Activated T-helper 2 cell treated with anti-CD3 and anti-CD28 coated beads, Interferon-gamma antibody, Interleukin-2, Interleukin-4, amounts not matched to agents 10 μg/mL and 5 μg/mL and 100 μg/mL, durations not matched to agents 14 hours and 24 hours and 36 hours (primary cell): ENCODE measurements at regions of chr13 and their contacts with region 1.

Region 1: GRCh38 chr13:20475927-20476691 is 49.5 kb downstream of the CRYL1 start:
- DNase-seq: peak; percentile 67
- H3K4me3 Mint-ChIP-seq: peak overlapping the region; percentile 53
- H3K27ac Mint-ChIP-seq: peak overlapping the region; percentile 82
- H3K4me1 Mint-ChIP-seq: peaks cover 31% of the 10 kb centered on the region
- H3K27me3 Mint-ChIP-seq: no peaks in the 10 kb centered on the region

Region 2: GRCh38 chr13:20359335-20359734 is 116.8 kb before region 1 on chr13:
- intact Hi-C with region 1: loop called (anchors 10 kb)
- DNase-seq: no peak
- H3K4me3 Mint-ChIP-seq: no peak overlapping the region
- H3K27ac Mint-ChIP-seq: no peak overlapping the region
- H3K4me1 Mint-ChIP-seq: peaks cover 8% of the 10 kb centered on the region
- H3K27me3 Mint-ChIP-seq: no peaks in the 10 kb centered on the region

Region 3: GRCh38 chr13:20418953-20419352 is 57.2 kb before region 1 on chr13:
- intact Hi-C with region 1: loop called (anchors 1 kb)
- DNase-seq: no peak
- H3K4me3 Mint-ChIP-seq: no peak overlapping the region
- H3K27ac Mint-ChIP-seq: no peak overlapping the region
- H3K4me1 Mint-ChIP-seq: peaks cover 38% of the 10 kb centered on the region
- H3K27me3 Mint-ChIP-seq: no peaks in the 10 kb centered on the region

Region 4: DNA sequence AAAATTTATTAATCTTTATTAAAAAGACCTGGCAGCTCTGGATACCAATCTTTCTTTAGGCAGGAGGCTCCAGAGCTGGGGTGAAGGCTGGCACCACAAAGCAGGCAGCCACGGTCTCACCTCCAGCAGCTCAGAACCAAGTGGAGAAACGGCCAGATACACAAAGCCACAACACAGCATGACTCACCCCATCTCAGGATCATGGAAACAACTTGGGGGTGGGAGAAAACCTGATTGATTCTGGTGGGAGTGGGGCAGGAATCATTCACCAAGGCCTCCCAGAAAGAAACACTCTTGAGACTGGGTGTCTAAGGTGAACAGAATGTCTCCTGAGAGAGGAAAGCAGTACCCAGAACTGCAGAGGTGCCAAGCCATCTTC is 14.6 kb before region 1 on chr13:
- intact Hi-C with region 1: no loop called
- DNase-seq: no peak
- H3K4me3 Mint-ChIP-seq: no peak overlapping the region
- H3K27ac Mint-ChIP-seq: peak overlapping the region; percentile 48
- H3K4me1 Mint-ChIP-seq: peaks cover 27% of the 10 kb centered on the region
- H3K27me3 Mint-ChIP-seq: no peaks in the 10 kb centered on the region